Stomach (tissue), 19 donors: ENCODE measurements at regions of chr2 and their contacts with region 1.

Region 1: DNA sequence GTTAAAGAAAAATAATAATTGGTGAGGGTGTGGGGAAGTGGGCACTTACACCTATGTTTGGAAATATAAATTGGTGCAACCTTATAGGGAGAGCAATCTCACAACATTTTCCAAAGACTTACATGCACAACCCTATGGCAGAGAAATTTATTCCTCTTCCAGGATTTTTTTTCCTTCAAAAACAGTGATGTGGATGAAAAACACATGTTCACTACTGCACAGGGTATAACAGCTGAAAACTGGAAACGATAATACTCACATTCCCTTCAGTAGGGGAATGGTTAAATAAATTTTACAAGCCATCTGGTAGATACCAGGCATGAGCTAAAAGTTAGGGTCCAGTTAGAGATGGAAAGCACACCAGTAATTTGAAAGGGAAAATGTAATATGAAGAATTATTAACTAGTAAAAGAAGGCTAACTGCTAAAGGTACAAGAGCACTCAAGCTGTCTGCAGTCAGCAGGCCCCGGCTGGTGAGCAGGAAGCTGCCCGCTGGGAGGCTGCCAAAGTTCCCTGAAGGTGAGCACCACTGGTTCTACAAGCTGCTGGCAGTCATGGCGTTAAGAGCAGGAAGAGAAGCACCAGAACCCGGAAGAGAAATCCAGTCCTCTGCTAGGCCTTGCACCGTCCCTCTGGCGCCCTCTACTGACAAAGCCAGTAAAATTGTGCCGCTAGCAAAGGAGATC is 28.4 kb upstream of the CASP8 start:
- DNase-seq: peak; percentile 97
- H3K4me3 ChIP-seq: no peak overlapping the region
- H3K27ac ChIP-seq: peak overlapping the region; percentile 31 to 88 (median 62)
- H3K4me1 ChIP-seq: peaks cover 4 to 59% (median 37%) of the 10 kb centered on the region in 4 donors
- H3K27me3 ChIP-seq: no peaks in the 10 kb centered on the region
- CTCF ChIP-seq: peak in 5 of 7 experiments; percentile 73 to 89 (median 85)
- EP300 ChIP-seq: no peak
- POLR2A ChIP-seq: no peak

Region 2: DNA sequence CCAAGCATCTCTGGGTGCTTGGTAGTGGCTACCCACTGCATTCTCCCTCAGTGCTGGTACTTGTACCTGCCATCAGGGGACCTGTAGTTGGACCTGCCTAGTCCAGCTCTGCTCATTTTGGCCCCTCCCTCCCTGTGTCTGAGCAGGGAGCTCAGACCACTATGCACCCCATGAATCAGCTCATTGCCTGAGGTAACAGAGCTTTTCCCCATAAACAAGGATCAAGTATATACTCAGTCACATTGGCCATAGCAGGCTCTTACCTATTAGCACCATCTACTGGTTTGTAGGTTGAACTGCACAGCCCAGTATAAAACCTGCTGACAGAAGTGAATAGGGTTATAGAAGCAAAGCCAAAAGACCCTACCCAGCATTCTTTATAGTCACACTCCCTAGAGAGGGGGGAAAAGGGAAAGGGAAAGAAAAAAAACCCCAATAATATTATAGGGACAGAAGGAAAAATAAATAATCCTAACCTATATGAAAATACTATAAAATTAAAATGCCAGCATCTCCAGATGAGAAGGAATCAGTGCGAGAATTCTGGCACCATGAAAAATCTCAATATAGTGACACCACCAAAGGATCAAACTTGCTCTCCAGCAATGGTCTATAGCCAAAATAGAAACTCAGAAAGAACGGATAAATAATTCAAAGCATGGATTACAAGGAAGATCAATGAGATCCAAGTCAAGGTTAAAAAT is 132.1 kb after region 1 on chr2:
- intact Hi-C with region 1: loop called (anchors 10 kb)
- DNase-seq: peak in 1 of 2 donors; percentile 53
- H3K4me3 ChIP-seq: no peak overlapping the region
- H3K27ac ChIP-seq: no peak overlapping the region
- H3K4me1 ChIP-seq: no peaks in the 10 kb centered on the region
- H3K27me3 ChIP-seq: no peaks in the 10 kb centered on the region
- CTCF ChIP-seq: peak in 5 of 7 experiments; percentile 49 to 83 (median 76)
- EP300 ChIP-seq: no peak
- POLR2A ChIP-seq: no peak